Caco-2 (cell line): ENCODE measurements at regions of chr13 and their contacts with region 1.

Region 1: GRCh38 chr13:71906448-71906847 is 39.4 kb upstream of the DACH1 start:
- DNase-seq: no peak
- H3K4me3 ChIP-seq: no peak overlapping the region
- H3K4me3 Mint-ChIP-seq: no peak overlapping the region
- H3K27ac Mint-ChIP-seq: no peak overlapping the region
- H3K4me1 ChIP-seq: no peaks in the 10 kb centered on the region
- H3K4me1 Mint-ChIP-seq: no peaks in the 10 kb centered on the region
- H3K27me3 ChIP-seq: no peaks in the 10 kb centered on the region
- H3K27me3 Mint-ChIP-seq: no peaks in the 10 kb centered on the region
- CTCF ChIP-seq: no peak

Region 2: DNA sequence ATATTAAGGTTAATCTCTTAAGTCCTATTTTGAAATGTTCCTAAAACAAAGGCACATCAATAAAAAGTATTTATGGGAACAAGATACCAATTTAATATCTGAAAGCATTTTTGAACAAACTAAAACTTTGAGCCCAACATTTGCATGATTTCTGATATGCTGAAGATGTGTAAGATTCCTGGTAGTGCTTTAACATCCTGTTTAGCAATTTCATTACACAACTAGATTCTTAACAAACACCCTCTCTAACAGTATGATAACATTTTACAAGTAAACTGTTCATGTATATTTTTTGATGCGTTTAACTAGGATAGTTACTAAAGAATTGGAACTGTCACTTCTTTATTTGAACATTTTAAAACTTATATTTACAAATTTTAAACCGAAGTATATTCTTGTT is 103.4 kb before region 1 on chr13:
- CTCF ChIA-PET with region 1: no interaction called
- POLR2A ChIA-PET with region 1: interaction called, 12 read pairs
- intact Hi-C with region 1: no loop called
- DNase-seq: no peak
- H3K4me3 ChIP-seq: no peak overlapping the region
- H3K4me3 Mint-ChIP-seq: no peak overlapping the region
- H3K27ac Mint-ChIP-seq: no peak overlapping the region
- H3K4me1 ChIP-seq: no peaks in the 10 kb centered on the region
- H3K4me1 Mint-ChIP-seq: no peaks in the 10 kb centered on the region
- H3K27me3 ChIP-seq: no peaks in the 10 kb centered on the region
- H3K27me3 Mint-ChIP-seq: no peaks in the 10 kb centered on the region
- CTCF ChIP-seq: no peak

Region 3: GRCh38 chr13:71979616-71980015 is 73.2 kb after region 1 on chr13:
- CTCF ChIA-PET with region 1: no interaction called
- POLR2A ChIA-PET with region 1: no interaction called
- intact Hi-C with region 1: loop called (anchors 10 kb)
- DNase-seq: peak in 1 of 2 experiments; percentile 22
- H3K4me3 ChIP-seq: no peak overlapping the region
- H3K4me3 Mint-ChIP-seq: no peak overlapping the region
- H3K27ac Mint-ChIP-seq: no peak overlapping the region
- H3K4me1 ChIP-seq: no peaks in the 10 kb centered on the region
- H3K4me1 Mint-ChIP-seq: no peaks in the 10 kb centered on the region
- H3K27me3 ChIP-seq: no peaks in the 10 kb centered on the region
- H3K27me3 Mint-ChIP-seq: peaks cover 4% of the 10 kb centered on the region
- CTCF ChIP-seq: peak; percentile 30 to 50

Region 4: DNA sequence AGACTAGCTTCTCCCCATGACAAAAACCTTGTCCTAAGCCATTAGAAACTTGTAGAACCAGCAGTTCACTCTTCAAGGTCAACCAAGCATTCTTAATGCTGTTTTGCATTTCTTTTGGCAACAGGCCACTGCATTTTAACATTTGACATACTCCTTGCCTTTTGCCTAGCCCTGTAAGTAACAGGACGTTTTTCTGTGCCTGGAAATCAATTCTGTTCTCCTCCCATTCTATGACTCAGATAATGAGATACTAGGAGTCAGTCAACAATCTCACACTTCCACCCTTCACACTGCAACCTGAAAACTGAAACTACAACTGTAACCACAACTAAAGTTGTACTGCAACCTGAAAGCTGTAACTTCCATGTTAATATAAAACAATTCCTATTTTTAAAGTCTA is 552.3 kb after region 1 on chr13:
- CTCF ChIA-PET with region 1: no interaction called
- POLR2A ChIA-PET with region 1: no interaction called
- intact Hi-C with region 1: no loop called
- DNase-seq: no peak
- H3K4me3 ChIP-seq: no peak overlapping the region
- H3K4me3 Mint-ChIP-seq: no peak overlapping the region
- H3K27ac Mint-ChIP-seq: no peak overlapping the region
- H3K4me1 ChIP-seq: no peaks in the 10 kb centered on the region
- H3K4me1 Mint-ChIP-seq: no peaks in the 10 kb centered on the region
- H3K27me3 ChIP-seq: no peaks in the 10 kb centered on the region
- H3K27me3 Mint-ChIP-seq: peaks cover 10% of the 10 kb centered on the region
- CTCF ChIP-seq: no peak